Ovary (tissue), 10 donors: ENCODE measurements at regions of chr5 and their contacts with region 1.

Region 1: GRCh38 chr5:112146323-112147226 is 272.5 kb downstream of the EPB41L4A start:
- DNase-seq: peak in 4 of 5 donors; percentile 34 to 68 (median 48)
- H3K4me3 ChIP-seq: no peak overlapping the region
- H3K27ac ChIP-seq: no peak overlapping the region
- H3K4me1 ChIP-seq: no peaks in the 10 kb centered on the region
- H3K27me3 ChIP-seq: no peaks in the 10 kb centered on the region
- CTCF ChIP-seq: peak; percentile 69 to 80 (median 77)
- EP300 ChIP-seq: no peak
- POLR2A ChIP-seq: no peak

Region 2: GRCh38 chr5:111159845-111160244 is 986.7 kb before region 1 on chr5:
- intact Hi-C with region 1: loop called in 1 of 4 experiments (anchors 10 kb)
- DNase-seq: no peak
- H3K4me3 ChIP-seq: no peak overlapping the region
- H3K27ac ChIP-seq: no peak overlapping the region
- H3K4me1 ChIP-seq: no peaks in the 10 kb centered on the region
- H3K27me3 ChIP-seq: no peaks in the 10 kb centered on the region
- CTCF ChIP-seq: no peak
- EP300 ChIP-seq: no peak
- POLR2A ChIP-seq: no peak

Region 3: DNA sequence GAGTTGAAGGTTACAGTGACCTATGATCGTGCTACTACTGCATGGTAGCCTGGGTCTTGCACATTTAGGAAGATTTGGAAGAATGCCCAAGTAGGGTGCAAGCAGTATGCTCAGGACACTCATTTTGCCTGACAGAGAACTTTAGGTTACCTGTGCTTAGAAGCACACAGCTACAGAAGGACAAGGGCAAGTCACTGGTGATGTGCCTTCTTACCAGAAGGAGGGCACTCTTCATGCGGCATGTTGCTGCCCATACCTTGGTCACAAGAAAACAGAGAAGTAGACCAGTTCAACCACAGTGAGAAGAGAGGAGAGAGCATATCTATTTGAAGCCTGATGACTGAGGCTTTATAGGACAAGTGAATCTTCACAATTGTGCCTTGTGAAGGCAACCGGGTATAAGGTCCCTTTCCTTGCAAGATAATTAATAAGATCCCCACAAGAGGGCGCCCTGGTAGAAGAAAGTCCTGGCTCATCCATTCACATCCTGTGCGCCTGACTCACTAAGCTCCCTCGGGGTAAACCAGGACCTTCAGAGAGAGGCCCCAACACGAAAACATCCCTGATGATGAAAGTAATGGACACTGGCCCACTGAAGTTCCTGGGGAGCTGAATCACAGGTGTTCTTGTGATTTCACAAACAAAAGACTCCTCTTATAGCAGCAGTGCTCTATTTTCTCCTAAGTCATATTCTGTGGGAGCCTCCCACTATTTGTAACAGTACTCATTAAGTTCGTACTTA is 596.1 kb before region 1 on chr5:
- intact Hi-C with region 1: loop called in 3 of 4 experiments (anchors 2 to 5 kb)
- DNase-seq: peak; percentile 52 to 84 (median 67)
- H3K4me3 ChIP-seq: no peak overlapping the region
- H3K27ac ChIP-seq: no peak overlapping the region
- H3K4me1 ChIP-seq: no peaks in the 10 kb centered on the region
- H3K27me3 ChIP-seq: no peaks in the 10 kb centered on the region
- CTCF ChIP-seq: peak in 2 of 3 donors; percentile 45 to 50
- EP300 ChIP-seq: no peak
- POLR2A ChIP-seq: no peak

Region 4: DNA sequence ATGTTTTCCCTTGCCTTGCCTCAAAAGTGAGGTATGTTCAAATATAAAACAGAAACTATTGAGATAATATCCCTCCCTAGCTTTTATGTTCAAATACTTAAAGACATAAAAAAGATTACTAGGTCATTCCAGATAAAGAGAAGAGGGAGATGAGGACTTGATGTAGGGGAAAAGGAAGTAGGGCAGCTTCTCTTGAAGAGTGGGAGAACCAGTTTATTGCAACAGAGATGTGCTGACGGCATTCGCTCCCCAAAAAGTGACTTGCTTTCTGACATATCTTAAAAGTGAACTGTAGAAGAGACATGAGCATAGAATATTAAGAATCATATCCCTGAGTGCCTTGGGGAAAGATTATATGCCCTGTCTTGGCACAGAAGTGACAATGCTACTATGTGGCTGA is 59.4 kb before region 1 on chr5:
- intact Hi-C with region 1: no loop called
- DNase-seq: no peak
- H3K4me3 ChIP-seq: no peak overlapping the region
- H3K27ac ChIP-seq: no peak overlapping the region
- H3K4me1 ChIP-seq: no peaks in the 10 kb centered on the region
- H3K27me3 ChIP-seq: no peaks in the 10 kb centered on the region
- CTCF ChIP-seq: no peak
- EP300 ChIP-seq: no peak
- POLR2A ChIP-seq: no peak